HEK293 (cell line): ENCODE measurements at regions of chr1 and their contacts with region 1.

Region 1: DNA sequence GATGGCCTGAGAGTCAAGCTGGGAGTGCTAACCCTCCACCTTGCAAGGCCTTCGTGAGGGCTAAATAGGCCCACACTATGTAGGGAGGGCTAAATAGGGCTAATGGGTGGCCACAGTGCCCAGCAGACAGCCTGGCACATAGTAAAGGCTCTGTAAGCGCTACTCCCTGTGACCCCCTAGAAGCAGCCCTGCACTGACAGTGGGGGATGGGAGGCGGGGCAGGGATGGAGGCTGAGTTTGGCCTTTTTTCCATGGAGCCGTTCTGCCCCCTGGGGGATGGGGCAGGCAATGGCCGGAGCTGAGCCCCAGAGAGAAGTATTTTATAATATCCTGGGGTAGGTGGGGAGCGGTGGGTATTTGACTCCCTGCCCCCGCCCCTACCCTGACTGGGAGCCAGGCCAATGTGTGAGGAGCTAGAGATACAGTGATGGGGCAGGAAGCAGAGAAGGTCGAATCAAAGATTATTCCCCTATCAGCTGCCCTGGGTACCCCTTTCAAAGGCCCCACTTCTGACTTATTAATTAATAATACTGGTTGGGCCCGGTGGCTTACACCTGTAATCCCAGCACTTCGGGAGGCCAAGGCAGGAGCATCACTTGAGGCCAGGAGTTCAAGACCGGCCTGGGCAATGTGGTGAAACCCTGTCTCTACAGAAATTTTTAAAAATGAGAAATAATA is 42.3 kb downstream of the LACTBL1 start:
- H3K4me3 ChIP-seq: no peak overlapping the region
- H3K27ac ChIP-seq: no peak overlapping the region
- H3K4me1 ChIP-seq: no peaks in the 10 kb centered on the region
- CTCF ChIP-seq: peak; percentile 63

Region 2: GRCh38 chr1:22665752-22666151 is 264.6 kb before region 1 on chr1:
- CTCF ChIA-PET with region 1: interaction called, 14 read pairs
- POLR2A ChIA-PET with region 1: no interaction called
- H3K4me3 ChIP-seq: no peak overlapping the region
- H3K27ac ChIP-seq: no peak overlapping the region
- H3K4me1 ChIP-seq: no peaks in the 10 kb centered on the region
- CTCF ChIP-seq: 0 out of 2 replicates have a peak, but pooled peaks have one; percentile 45

Region 3: GRCh38 chr1:22963044-22963677 is 32.8 kb after region 1 on chr1:
- CTCF ChIA-PET with region 1: interaction called, 11 read pairs
- POLR2A ChIA-PET with region 1: no interaction called
- H3K4me3 ChIP-seq: no peak overlapping the region
- H3K27ac ChIP-seq: no peak overlapping the region
- H3K4me1 ChIP-seq: no peaks in the 10 kb centered on the region
- CTCF ChIP-seq: no peak